ENCODE measurements at regions of chr14 and their contacts with region 1.

Region 1: GRCh38 chr14:92906823-92907222 is 16.1 kb upstream of the CHGA start:
- DNase-seq: peak; percentile 75
- H3K4me3 ChIP-seq: no peak overlapping the region
- H3K27ac ChIP-seq: peak overlapping the region in 1 of 2 experiments; percentile 93; a peak in 2 of 4 replicates
- H3K4me1 ChIP-seq: peaks cover 0 to 19% of the 10 kb centered on the region in 2 experiments; a peak in 1 of 4 replicates
- H3K27me3 ChIP-seq: no peaks in the 10 kb centered on the region
- CTCF ChIP-seq: no peak
- EP300 ChIP-seq: peak in 1 of 2 experiments; percentile 91; a peak in 2 of 4 replicates
- RAD21 ChIP-seq: peak; percentile 37

Region 2: DNA sequence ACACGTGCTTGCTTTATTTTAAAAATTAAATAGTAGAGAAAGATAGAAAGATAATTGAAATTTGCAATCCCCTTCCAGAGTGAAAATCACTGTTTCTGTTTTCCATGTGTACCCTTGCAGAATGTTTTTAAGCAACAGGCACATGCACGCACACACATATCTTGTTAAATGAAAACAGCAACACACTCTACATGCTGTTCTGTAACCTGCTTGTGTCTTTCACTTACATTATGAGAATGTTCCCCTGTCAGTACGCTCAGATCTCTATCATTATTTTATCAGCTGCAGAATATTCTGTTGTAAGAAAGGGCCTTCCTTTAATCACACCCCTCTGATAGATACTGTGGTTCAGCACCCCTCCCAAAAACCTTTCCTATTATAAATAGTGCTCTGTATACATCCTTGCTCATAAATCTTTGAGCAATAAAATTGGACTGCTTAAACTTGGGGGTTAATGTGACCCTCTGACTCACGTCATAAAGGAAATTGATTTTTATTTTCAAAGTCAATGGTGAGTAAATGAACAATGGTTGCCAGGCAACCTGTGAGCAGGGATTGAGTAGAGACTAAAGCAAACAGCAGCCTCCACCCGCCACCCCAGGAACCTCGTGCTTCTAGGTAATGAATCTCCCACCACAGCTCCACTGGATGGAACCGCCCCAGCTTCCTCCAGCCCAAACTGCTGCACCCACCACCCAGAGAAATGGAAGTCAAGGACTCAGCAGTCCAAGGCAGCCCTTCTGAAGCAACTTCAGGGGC is 15.8 kb before region 1 on chr14:
- CTCF ChIA-PET with region 1: interaction called, 5 read pairs
- POLR2A ChIA-PET with region 1: interaction called, 23 read pairs
- DNase-seq: no peak
- H3K4me3 ChIP-seq: no peak overlapping the region
- H3K27ac ChIP-seq: peak overlapping the region in 1 of 2 experiments; percentile 81; a peak in 2 of 4 replicates
- H3K4me1 ChIP-seq: peaks cover 0 to 38% of the 10 kb centered on the region in 2 experiments; a peak in 2 of 4 replicates
- H3K27me3 ChIP-seq: no peaks in the 10 kb centered on the region; the same call in 1 of the 2 replicates
- CTCF ChIP-seq: no peak
- EP300 ChIP-seq: peak in 1 of 2 experiments; percentile 84; a peak in 2 of 4 replicates
- RAD21 ChIP-seq: peak; percentile 34; the same call in 1 of the 2 replicates

Measured in SK-N-SH (cell line).